ENCODE measurements at regions of chr1 and their contacts with region 1.

Region 1: GRCh38 chr1:225318706-225319575 is 108.9 kb downstream of the LBR start:
- H3K4me3 ChIP-seq: no peak overlapping the region
- H3K27ac ChIP-seq: no peak overlapping the region
- H3K4me1 ChIP-seq: no peaks in the 10 kb centered on the region
- CTCF ChIP-seq: peak; percentile 88

Region 2: GRCh38 chr1:225304996-225305395 is 13.9 kb before region 1 on chr1:
- CTCF ChIA-PET with region 1: interaction called, 43 read pairs
- POLR2A ChIA-PET with region 1: no interaction called
- H3K4me3 ChIP-seq: no peak overlapping the region
- H3K27ac ChIP-seq: no peak overlapping the region
- H3K4me1 ChIP-seq: no peaks in the 10 kb centered on the region
- CTCF ChIP-seq: no peak

Region 3: DNA sequence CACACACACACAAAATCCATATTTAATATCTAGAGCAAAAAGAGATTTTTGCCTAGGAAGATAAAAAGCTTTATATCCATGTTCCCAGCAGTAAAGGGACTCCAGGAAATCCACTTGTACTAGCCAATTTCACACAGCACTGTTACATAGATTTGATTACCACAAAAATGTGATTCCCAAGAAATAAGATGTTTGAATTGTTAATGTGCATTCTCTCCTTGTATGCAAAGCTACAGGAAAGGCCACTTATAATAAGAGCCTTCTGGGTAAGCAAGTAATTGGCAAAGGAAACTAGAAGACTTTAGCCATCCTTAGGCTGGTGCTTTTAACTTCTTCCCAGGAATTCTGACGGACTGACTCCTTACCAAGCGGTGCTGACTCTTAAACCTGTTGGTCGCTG is 19.6 kb after region 1 on chr1:
- CTCF ChIA-PET with region 1: interaction called, 71 read pairs
- POLR2A ChIA-PET with region 1: no interaction called
- H3K4me3 ChIP-seq: no peak overlapping the region
- H3K27ac ChIP-seq: no peak overlapping the region
- H3K4me1 ChIP-seq: no peaks in the 10 kb centered on the region
- CTCF ChIP-seq: no peak

Region 4: GRCh38 chr1:225355863-225356262 is 36.9 kb after region 1 on chr1:
- CTCF ChIA-PET with region 1: interaction called, 13 read pairs
- POLR2A ChIA-PET with region 1: no interaction called
- H3K4me3 ChIP-seq: no peak overlapping the region
- H3K27ac ChIP-seq: no peak overlapping the region
- H3K4me1 ChIP-seq: no peaks in the 10 kb centered on the region
- CTCF ChIP-seq: no peak

Region 5: DNA sequence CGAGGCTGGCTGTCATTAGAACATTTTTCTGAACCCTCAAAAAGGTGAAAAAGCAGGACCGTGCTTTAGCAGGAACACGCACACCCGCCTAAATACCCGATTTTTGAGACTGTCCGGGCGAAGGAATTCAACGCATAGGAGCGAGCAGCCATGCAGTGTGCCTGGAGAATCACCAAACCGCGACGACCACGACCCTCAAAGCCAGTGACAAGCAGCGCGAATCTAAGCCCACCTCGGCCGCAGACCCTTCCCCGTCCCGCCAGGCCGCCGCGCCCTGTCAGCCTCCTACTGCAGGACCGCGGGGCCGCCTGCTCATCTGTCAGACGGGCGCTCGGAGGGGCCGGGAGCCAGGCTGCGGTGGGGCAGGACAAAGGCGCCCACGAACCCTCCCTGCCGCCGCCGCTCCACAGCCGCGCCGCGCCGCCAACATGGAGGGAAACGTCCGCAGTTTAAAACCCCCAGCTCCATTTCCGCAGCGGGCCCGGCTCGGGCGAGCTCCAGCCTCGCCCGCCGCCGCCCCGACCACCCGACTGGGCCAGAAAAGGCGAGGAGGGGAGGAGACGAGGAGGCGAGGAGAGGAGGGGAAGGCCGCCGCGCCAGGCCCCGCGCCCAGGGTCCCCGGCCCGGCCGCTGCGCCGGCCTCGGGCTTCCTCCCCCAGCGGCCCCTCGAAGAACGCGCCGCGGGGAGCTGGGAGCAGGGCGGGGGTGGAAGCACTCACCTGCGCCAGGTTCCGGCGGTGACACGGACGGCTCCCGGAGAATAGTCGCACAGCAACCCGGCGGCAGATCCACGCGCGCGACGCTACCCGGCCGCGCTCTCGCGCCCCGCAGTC is 108.5 kb after region 1 on chr1 and contains the start of gene LBR:
- CTCF ChIA-PET with region 1: interaction called, 16 read pairs
- POLR2A ChIA-PET with region 1: interaction called, 3 read pairs
- H3K4me3 ChIP-seq: peak within 1 kb of the TSS; percentile 90
- H3K27ac ChIP-seq: peak within 1 kb of the TSS; percentile 83
- H3K4me1 ChIP-seq: peaks cover 32% of the 10 kb centered on the region
- CTCF ChIP-seq: no peak

Region 6: DNA sequence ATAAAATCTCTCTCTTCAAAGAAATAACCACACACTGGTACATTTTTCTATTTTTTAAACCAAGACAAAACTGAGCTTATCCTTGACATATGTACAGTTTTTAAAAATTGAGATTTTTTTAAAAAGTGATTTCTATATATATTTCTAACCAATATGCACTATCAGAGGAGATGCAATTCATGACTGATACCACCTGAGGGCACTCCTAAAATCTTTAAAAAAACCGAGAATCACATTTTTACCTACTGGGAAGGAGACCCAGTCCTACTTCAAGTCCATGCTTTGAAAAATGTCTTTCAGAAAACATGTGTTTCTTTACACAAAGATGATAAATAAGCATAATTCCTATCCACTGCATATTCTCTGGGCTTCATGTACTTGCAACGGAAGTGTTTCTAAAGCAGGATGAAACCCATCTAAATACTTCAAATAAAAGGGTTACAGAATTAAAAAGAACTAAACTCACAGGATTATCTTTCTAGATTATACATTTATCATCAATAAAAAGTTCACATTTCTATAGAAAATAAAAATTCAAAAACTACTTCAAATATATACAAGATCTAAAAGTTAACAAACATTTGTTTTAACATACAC is 235.4 kb after region 1 on chr1:
- CTCF ChIA-PET with region 1: no interaction called
- POLR2A ChIA-PET with region 1: no interaction called
- H3K4me3 ChIP-seq: no peak overlapping the region
- H3K27ac ChIP-seq: no peak overlapping the region
- H3K4me1 ChIP-seq: no peaks in the 10 kb centered on the region
- CTCF ChIP-seq: 0 out of 2 replicates have a peak, but pooled peaks have one; percentile 33

Region 7: DNA sequence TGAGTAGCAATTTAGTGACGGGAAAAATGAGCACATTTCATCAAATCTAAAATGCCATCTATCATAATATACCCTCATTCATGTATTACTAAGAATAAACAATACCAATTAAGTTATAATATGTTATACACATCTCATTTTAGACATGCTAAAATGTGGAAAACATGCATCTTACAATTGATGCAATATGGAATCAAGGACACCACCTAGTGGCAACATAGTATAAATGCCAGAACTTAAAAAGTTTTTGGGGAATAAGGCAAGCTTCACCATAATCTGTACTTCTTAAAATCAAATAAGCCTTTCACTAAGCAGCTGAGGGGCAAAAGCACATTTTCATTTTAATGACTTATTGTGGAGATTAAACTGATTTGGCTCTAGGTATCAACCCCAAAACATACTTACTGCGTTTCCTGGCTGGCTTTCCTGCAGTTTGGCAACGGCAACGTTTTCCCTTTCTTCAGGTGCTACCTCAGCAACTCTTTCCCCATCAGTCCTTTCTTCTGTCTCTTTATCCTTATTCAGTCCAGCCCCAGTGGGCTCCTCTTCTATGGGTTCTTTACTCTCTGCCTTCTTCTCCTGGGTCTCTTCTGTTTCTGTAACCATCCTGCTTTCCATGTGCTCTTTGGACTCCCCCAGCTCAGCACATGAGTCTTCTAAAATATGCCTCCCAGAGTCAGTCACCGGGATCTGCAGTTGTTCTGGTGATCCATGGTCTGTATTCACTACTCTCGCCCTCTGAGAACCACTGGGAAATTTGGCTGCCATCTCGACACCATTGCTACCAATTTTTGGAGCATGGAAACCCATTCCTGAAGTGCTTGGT is 668.8 kb after region 1 on chr1:
- CTCF ChIA-PET with region 1: interaction called, 10 read pairs
- POLR2A ChIA-PET with region 1: no interaction called
- H3K4me3 ChIP-seq: no peak overlapping the region
- H3K27ac ChIP-seq: no peak overlapping the region
- H3K4me1 ChIP-seq: no peaks in the 10 kb centered on the region
- CTCF ChIP-seq: peak; percentile 53; the same call in 1 of the 2 replicates

Measured in HEK293 (cell line).